Activated CD8-positive, alpha-beta T cell treated with anti-CD3 and anti-CD28 coated beads for 36 hours (primary cell): ENCODE measurements at regions of chr9 and their contacts with region 1.

Region 1: DNA sequence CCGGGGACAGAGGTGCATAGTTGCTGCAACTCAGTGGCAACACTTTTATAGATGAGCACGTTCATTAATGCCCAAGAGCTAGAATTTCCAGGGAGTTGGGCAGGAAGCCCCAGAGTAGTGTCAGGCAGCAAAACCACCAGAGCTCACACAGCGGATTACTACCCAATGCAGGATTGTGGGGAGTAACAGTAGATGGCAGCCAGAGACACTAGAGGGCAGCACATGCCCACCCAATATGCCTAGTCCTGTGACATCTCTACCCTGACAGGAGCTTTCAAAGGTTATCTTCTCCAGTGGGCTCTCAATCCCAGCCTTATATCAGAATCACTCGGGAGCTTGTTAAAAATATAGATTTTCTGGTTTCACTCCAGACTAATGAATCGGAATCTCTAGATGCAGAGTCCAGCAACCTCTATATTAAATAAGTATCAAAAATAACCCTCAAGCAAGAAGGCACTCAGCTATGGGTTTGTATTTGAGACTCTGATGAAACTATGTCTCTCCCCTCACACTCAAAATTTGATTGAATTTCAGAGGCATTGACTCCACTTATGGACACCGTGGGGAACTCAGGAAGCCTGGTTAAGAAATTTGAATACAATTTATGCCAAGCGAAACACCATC is 58.4 kb upstream of the PHF24 start:
- DNase-seq: peak; percentile 90
- ATAC-seq: peak; percentile 100
- H3K4me3 Mint-ChIP-seq: no peak overlapping the region
- H3K27ac Mint-ChIP-seq: no peak overlapping the region
- H3K4me1 Mint-ChIP-seq: no peaks in the 10 kb centered on the region
- H3K27me3 Mint-ChIP-seq: peaks cover 30% of the 10 kb centered on the region
- CTCF ChIP-seq: peak; percentile 76

Region 2: GRCh38 chr9:34759432-34760134 is 140.1 kb before region 1 on chr9:
- CTCF ChIA-PET with region 1: interaction called, 11 read pairs
- POLR2A ChIA-PET with region 1: no interaction called
- intact Hi-C with region 1: no loop called
- DNase-seq: no peak
- ATAC-seq: no peak
- H3K4me3 Mint-ChIP-seq: no peak overlapping the region
- H3K27ac Mint-ChIP-seq: no peak overlapping the region
- H3K4me1 Mint-ChIP-seq: peaks cover 5% of the 10 kb centered on the region
- H3K27me3 Mint-ChIP-seq: peaks cover 30% of the 10 kb centered on the region
- CTCF ChIP-seq: no peak

Region 3: DNA sequence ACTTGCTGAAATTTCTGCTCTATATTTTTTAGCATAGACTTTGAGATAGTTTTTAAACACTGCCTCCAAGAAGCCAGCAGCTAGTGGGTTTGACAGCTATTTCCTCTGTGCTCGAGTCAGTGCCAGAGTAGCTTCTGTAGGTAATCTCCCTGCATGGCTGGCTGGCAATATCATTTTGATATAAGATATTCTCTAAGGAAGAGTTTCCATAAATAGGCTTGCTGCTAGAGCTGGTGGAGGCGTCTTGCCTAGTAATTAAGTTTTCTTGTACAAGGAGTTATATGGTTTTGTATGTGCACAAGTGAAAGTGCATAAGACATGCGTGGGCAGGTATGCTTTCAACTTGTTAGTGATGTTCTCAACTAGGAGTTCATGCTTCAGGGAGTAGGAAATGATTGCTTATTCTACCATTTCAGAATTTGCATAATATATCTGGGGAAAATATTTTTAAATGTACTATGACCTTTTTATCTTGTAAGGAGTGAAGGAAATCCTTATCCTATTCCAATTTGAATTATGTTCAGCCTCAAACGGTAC is 115.6 kb before region 1 on chr9:
- CTCF ChIA-PET with region 1: no interaction called
- POLR2A ChIA-PET with region 1: no interaction called
- intact Hi-C with region 1: no loop called
- DNase-seq: no peak
- ATAC-seq: no peak
- H3K4me3 Mint-ChIP-seq: no peak overlapping the region
- H3K27ac Mint-ChIP-seq: no peak overlapping the region
- H3K4me1 Mint-ChIP-seq: no peaks in the 10 kb centered on the region
- H3K27me3 Mint-ChIP-seq: peaks cover 7% of the 10 kb centered on the region
- CTCF ChIP-seq: no peak

Region 4: GRCh38 chr9:34826999-34827538 is 72.6 kb before region 1 on chr9:
- CTCF ChIA-PET with region 1: no interaction called
- POLR2A ChIA-PET with region 1: no interaction called
- intact Hi-C with region 1: no loop called
- DNase-seq: no peak
- ATAC-seq: no peak
- H3K4me3 Mint-ChIP-seq: no peak overlapping the region
- H3K27ac Mint-ChIP-seq: no peak overlapping the region
- H3K4me1 Mint-ChIP-seq: no peaks in the 10 kb centered on the region
- H3K27me3 Mint-ChIP-seq: peaks cover 14% of the 10 kb centered on the region
- CTCF ChIP-seq: no peak

Region 5: DNA sequence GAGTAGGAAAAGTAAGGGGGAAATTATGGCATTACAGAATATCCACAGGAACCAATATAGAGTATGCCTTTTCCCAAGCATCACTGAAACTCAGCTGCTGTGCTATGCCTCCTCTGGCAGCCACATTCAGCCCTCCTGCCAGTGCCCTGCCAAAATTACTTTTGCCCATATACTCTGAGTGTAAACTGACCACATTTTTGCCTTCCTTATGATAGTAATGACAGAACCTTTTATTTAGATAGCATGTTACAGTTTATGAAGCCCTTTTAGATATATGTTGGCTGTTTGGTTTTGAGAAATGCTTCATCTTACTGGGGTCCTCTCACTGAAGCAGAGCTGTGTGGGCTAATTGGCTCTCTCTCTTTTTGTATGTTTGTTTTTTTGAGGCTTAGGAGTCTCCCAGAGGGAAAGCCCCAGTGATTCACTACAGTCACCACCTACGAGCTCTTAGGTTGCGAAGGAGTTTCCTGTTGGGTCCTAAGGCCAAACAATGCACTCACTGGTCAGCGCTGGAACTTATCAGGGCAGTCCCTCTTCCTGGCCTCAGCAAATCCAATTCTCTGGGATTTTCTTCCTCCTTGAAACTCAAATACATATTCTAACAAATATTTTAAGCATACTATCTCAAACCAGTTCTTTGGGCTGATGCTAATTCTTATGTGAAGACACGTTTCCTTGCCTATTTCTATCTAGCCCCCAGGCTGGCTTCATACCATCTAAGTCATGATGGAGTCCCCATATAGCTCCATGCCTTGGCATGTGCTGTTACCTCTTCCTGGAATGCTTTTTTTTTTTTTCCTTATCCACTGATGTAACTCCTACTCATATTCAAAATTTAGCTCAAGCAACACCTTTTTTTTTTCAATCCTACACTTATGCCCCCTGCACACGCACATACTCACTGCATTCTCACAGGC is 62.2 kb after region 1 on chr9:
- CTCF ChIA-PET with region 1: interaction called, 21 read pairs
- POLR2A ChIA-PET with region 1: no interaction called
- intact Hi-C with region 1: no loop called
- DNase-seq: peak; percentile 48
- ATAC-seq: peak; percentile 84
- H3K4me3 Mint-ChIP-seq: no peak overlapping the region
- H3K27ac Mint-ChIP-seq: no peak overlapping the region
- H3K4me1 Mint-ChIP-seq: peaks cover 32% of the 10 kb centered on the region
- H3K27me3 Mint-ChIP-seq: peaks cover 57% of the 10 kb centered on the region
- CTCF ChIP-seq: no peak

Region 6: DNA sequence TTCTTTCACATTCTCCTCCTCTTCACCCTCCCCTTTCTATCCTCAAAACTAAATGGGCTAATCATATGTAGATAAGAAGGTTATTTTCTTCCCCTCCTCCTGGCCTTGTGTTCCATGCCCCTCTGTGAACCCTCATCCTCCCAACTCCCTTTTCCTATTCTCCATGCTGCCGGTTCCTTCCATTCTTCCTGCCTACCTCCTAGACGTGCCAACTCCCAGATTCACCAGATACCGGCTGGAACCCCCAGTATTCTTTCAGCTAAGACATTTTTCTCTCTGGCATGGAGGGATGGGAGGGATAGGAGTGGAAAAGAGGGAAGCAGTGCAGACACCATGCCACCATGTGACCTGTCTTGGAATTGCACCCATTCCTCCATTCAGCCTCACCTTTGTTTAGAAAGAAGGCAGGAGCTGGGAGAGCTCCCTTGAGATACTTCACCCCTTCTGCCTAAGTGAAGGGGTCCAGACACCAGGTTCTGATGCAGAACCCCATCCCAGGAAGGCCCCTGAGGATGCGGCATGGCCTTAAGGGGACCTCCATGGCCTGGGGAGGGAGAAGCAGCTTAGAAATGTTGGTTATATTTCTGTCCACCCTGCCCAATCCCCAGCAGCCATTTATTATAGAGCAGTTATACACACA is 94.7 kb after region 1 on chr9:
- CTCF ChIA-PET with region 1: interaction called, 22 read pairs
- POLR2A ChIA-PET with region 1: no interaction called
- intact Hi-C with region 1: no loop called
- DNase-seq: no peak
- ATAC-seq: no peak
- H3K4me3 Mint-ChIP-seq: no peak overlapping the region
- H3K27ac Mint-ChIP-seq: peak overlapping the region; percentile 86
- H3K4me1 Mint-ChIP-seq: peaks cover 53% of the 10 kb centered on the region
- H3K27me3 Mint-ChIP-seq: no peaks in the 10 kb centered on the region
- CTCF ChIP-seq: peak; percentile 62

Region 7: GRCh38 chr9:35029852-35030251 is 130.2 kb after region 1 on chr9:
- CTCF ChIA-PET with region 1: interaction called, 19 read pairs
- POLR2A ChIA-PET with region 1: interaction called, 4 read pairs
- intact Hi-C with region 1: no loop called
- DNase-seq: no peak
- ATAC-seq: no peak
- H3K4me3 Mint-ChIP-seq: no peak overlapping the region
- H3K27ac Mint-ChIP-seq: no peak overlapping the region
- H3K4me1 Mint-ChIP-seq: no peaks in the 10 kb centered on the region
- H3K27me3 Mint-ChIP-seq: no peaks in the 10 kb centered on the region
- CTCF ChIP-seq: no peak

Region 8: DNA sequence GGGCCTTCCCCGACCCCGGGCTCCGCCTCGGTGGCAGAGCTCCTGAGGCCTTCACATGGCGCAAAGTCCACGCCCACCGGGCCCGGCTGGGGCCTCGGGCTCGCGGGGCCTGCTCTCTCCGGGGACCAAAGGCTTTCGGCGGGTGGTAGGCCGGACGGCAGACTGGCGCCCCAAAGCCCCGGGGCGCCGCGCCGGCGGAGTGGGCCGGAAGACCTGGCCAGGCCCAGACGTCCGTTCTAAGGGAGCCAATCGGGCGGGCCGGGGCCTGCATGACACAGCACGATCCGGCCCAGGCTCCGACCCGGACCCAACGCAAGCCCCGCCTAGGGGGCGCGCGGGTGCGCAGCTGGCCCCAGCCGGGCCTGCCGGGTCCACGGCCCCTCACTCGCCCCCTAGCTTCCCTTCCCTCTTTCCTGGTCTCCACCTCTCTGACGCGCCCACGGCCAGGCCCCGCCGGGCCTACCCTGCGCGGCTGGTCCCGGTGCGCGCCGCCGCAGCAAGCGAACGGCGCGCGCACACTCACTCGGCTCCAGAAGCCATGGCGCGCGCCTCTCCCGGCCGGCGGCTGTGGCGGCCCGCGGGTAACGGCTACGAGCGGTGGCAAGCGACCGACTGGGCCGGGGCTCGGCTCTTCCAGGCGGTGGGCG is 172.3 kb after region 1 on chr9:
- CTCF ChIA-PET with region 1: interaction called, 12 read pairs
- POLR2A ChIA-PET with region 1: interaction called, 3 read pairs
- intact Hi-C with region 1: no loop called
- DNase-seq: peak; percentile 78
- ATAC-seq: peak; percentile 56
- H3K4me3 Mint-ChIP-seq: peak overlapping the region; percentile 94
- H3K27ac Mint-ChIP-seq: peak overlapping the region; percentile 94
- H3K4me1 Mint-ChIP-seq: peaks cover 56% of the 10 kb centered on the region
- H3K27me3 Mint-ChIP-seq: no peaks in the 10 kb centered on the region
- CTCF ChIP-seq: peak; percentile 40

Region 9: DNA sequence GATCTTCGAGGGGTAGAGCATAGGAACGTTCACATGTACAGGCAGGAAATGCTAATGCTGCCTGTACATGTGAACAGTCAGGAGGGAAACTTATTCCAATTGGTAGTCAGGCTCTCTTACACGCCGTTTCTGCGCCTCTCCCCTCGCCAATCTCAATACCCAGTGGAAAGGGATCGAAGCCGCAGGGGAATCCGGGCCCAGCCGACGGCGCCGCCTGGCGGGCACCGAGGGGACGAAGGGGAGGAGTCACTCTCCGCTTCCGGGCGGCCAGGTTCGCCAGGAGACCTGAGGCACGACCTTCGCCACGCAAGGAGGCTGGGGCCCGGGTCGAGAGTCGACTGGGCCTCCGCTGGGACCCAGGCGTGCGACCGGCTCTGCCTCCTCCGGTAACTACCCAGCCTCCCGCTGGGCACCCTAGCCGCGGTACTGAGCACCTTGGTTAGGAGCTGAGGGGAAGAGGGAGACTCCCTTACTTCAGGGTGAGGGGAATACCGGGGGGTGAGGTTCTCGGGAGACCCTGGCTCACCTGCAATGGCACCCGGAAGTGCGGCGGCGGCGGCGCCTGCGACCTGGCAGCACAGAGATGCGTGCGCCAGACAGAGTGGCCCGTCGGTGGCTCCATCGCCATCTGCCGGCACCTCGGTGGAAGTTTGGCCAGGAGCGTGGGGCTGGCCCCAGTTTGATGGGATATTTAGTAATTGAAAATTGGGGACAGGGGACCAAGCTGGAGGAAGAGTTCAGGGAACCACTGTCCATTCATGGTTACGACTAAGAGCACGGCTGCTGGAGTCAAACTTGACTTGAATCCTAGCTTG is 196.6 kb after region 1 on chr9 and contains the start of gene PIGO:
- CTCF ChIA-PET with region 1: interaction called, 36 read pairs
- POLR2A ChIA-PET with region 1: interaction called, 3 read pairs
- intact Hi-C with region 1: loop called (anchors 1 kb)
- DNase-seq: peak; percentile 93
- ATAC-seq: peak; percentile 92
- H3K4me3 Mint-ChIP-seq: peak within 1 kb of the TSS; percentile 85
- H3K27ac Mint-ChIP-seq: peak within 1 kb of the TSS; percentile 93
- H3K4me1 Mint-ChIP-seq: peaks cover 23% of the 10 kb centered on the region
- H3K27me3 Mint-ChIP-seq: no peaks in the 10 kb centered on the region
- CTCF ChIP-seq: peak; percentile 95
- total RNA-seq, gene PIGO: 19.8 to 21.9 TPM

Region 10: GRCh38 chr9:35203528-35203927 is 303.9 kb after region 1 on chr9:
- CTCF ChIA-PET with region 1: no interaction called
- POLR2A ChIA-PET with region 1: no interaction called
- intact Hi-C with region 1: no loop called
- DNase-seq: no peak
- ATAC-seq: no peak
- H3K4me3 Mint-ChIP-seq: no peak overlapping the region
- H3K27ac Mint-ChIP-seq: no peak overlapping the region
- H3K4me1 Mint-ChIP-seq: no peaks in the 10 kb centered on the region
- H3K27me3 Mint-ChIP-seq: peaks cover 8% of the 10 kb centered on the region
- CTCF ChIP-seq: no peak